CD8-positive, alpha-beta T cell (primary cell): ENCODE measurements at regions of chr1 and their contacts with region 1.

Region 1: GRCh38 chr1:211698161-211699026 is 23.0 kb upstream of the NEK2 start:
- DNase-seq: peak; percentile 70 to 90 (median 82)
- ATAC-seq: peak; percentile 96
- H3K4me3 ChIP-seq: peak overlapping the region; percentile 18 to 34
- H3K4me3 Mint-ChIP-seq: peak overlapping the region; percentile 76
- H3K27ac ChIP-seq: no peak overlapping the region
- H3K27ac Mint-ChIP-seq: no peak overlapping the region
- H3K4me1 ChIP-seq: peaks cover 30% of the 10 kb centered on the region
- H3K4me1 Mint-ChIP-seq: peaks cover 42% of the 10 kb centered on the region
- H3K27me3 ChIP-seq: no peaks in the 10 kb centered on the region
- H3K27me3 Mint-ChIP-seq: no peaks in the 10 kb centered on the region
- CTCF ChIP-seq: peak; percentile 99

Region 2: GRCh38 chr1:211675230-211676105 is 22.9 kb before region 1 on chr1 and contains the start of gene NEK2:
- CTCF ChIA-PET with region 1: interaction called, 65 read pairs
- POLR2A ChIA-PET with region 1: interaction called, 8 read pairs
- intact Hi-C with region 1: loop called in 1 of 2 experiments (anchors 2 kb)
- DNase-seq: peak; percentile 61 to 92 (median 84)
- ATAC-seq: peak; percentile 89
- H3K4me3 ChIP-seq: peak within 1 kb of the TSS; percentile 67 to 85
- H3K4me3 Mint-ChIP-seq: peak within 1 kb of the TSS; percentile 91
- H3K27ac ChIP-seq: peak within 1 kb of the TSS; percentile 18 to 22
- H3K27ac Mint-ChIP-seq: peak within 1 kb of the TSS; percentile 76
- H3K4me1 ChIP-seq: peaks cover 7% of the 10 kb centered on the region
- H3K4me1 Mint-ChIP-seq: peaks cover 14% of the 10 kb centered on the region
- H3K27me3 ChIP-seq: no peaks in the 10 kb centered on the region
- H3K27me3 Mint-ChIP-seq: no peaks in the 10 kb centered on the region
- CTCF ChIP-seq: no peak
- total RNA-seq, gene NEK2: 0.19 to 0.35 TPM

Region 3: DNA sequence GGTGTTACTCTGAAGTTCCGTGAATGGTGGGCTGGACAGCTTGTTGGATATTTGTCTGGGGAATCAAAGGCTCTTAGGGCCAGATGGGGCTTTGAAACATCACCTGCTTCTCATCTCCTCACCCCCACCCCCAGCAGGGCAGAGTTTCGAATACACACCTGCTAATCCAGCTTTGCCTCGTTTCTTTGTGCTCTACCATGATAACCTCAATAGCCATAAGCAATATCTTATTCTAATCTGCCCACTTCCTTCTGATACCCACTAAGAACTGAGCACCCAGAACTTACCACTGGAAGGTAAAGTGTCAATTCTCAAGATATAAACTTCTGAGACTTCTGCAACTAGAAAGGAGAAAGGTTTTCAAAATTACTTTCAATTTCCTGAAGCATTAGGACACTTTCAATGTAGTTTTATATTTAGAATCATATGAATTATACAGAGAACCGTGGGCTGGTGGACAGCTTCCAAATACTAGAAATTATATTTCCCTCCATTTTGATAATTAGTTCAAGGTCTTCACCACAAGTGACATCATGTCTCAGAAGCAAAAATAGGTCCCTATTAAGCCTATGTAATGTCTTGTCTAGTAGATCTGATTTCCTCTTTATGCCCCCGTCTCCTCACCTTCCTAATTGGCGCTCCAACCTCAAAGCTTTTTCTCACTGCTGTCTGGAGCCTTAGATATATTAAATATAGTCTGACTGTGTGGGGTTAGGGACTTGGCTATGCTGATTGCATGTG is 41.4 kb after region 1 on chr1:
- CTCF ChIA-PET with region 1: interaction called, 10 read pairs
- POLR2A ChIA-PET with region 1: interaction called, 4 read pairs
- intact Hi-C with region 1: no loop called
- DNase-seq: peak in 3 of 9 experiments; percentile 31 to 66 (median 49)
- ATAC-seq: peak; percentile 67
- H3K4me3 ChIP-seq: peak overlapping the region in 1 of 2 experiments; percentile 10
- H3K4me3 Mint-ChIP-seq: peak overlapping the region; percentile 74
- H3K27ac ChIP-seq: peak overlapping the region in 1 of 2 experiments; percentile 68
- H3K27ac Mint-ChIP-seq: peak overlapping the region; percentile 90
- H3K4me1 ChIP-seq: peaks cover 35% of the 10 kb centered on the region
- H3K4me1 Mint-ChIP-seq: peaks cover 39% of the 10 kb centered on the region
- H3K27me3 ChIP-seq: no peaks in the 10 kb centered on the region
- H3K27me3 Mint-ChIP-seq: no peaks in the 10 kb centered on the region
- CTCF ChIP-seq: no peak

Region 4: GRCh38 chr1:211830330-211831142 is 132.1 kb after region 1 on chr1 and contains the start of gene LPGAT1:
- CTCF ChIA-PET with region 1: interaction called, 11 read pairs
- POLR2A ChIA-PET with region 1: interaction called, 4 read pairs
- intact Hi-C with region 1: loop called (anchors 1 kb)
- DNase-seq: peak; percentile 37 to 84 (median 71)
- ATAC-seq: peak; percentile 79
- H3K4me3 ChIP-seq: peak within 1 kb of the TSS; percentile 69 to 75
- H3K4me3 Mint-ChIP-seq: peak within 1 kb of the TSS; percentile 90
- H3K27ac ChIP-seq: peak within 1 kb of the TSS; percentile 50 to 78
- H3K27ac Mint-ChIP-seq: peak within 1 kb of the TSS; percentile 92
- H3K4me1 ChIP-seq: peaks cover 44% of the 10 kb centered on the region
- H3K4me1 Mint-ChIP-seq: peaks cover 64% of the 10 kb centered on the region
- H3K27me3 ChIP-seq: no peaks in the 10 kb centered on the region
- H3K27me3 Mint-ChIP-seq: no peaks in the 10 kb centered on the region
- CTCF ChIP-seq: peak; percentile 51
- total RNA-seq, gene LPGAT1: 17.9 to 19.1 TPM